SK-N-SH (cell line): ENCODE measurements at regions of chr11 and their contacts with region 1.

Region 1: GRCh38 chr11:116787786-116788486 is at the start of gene ZPR1:
- DNase-seq: peak; percentile 96
- H3K4me3 ChIP-seq: peak within 1 kb of the TSS; percentile 75 to 93
- H3K27ac ChIP-seq: peak within 1 kb of the TSS; percentile 58 to 70
- H3K4me1 ChIP-seq: peaks cover 5 to 20% of the 10 kb centered on the region in 2 experiments; a peak in 3 of 4 replicates
- H3K27me3 ChIP-seq: no peaks in the 10 kb centered on the region
- CTCF ChIP-seq: no peak
- EP300 ChIP-seq: no peak
- RAD21 ChIP-seq: no peak
- polyA plus RNA-seq, gene ZPR1: 52.4 and 69.2 TPM in 2 replicates

Region 2: GRCh38 chr11:116533186-116533825 is 254.6 kb before region 1 on chr11:
- CTCF ChIA-PET with region 1: no interaction called
- POLR2A ChIA-PET with region 1: no interaction called
- DNase-seq: peak; percentile 87
- H3K4me3 ChIP-seq: no peak overlapping the region
- H3K27ac ChIP-seq: peak overlapping the region in 1 of 2 experiments; percentile 83; a peak in 2 of 4 replicates
- H3K4me1 ChIP-seq: peaks cover 0 to 10% of the 10 kb centered on the region in 2 experiments; a peak in 1 of 4 replicates
- H3K27me3 ChIP-seq: peaks cover 13% of the 10 kb centered on the region; the same call in 1 of the 2 replicates
- CTCF ChIP-seq: 0 out of 2 replicates have a peak, but pooled peaks have one; percentile 27
- EP300 ChIP-seq: no peak
- RAD21 ChIP-seq: peak; percentile 81

Region 3: DNA sequence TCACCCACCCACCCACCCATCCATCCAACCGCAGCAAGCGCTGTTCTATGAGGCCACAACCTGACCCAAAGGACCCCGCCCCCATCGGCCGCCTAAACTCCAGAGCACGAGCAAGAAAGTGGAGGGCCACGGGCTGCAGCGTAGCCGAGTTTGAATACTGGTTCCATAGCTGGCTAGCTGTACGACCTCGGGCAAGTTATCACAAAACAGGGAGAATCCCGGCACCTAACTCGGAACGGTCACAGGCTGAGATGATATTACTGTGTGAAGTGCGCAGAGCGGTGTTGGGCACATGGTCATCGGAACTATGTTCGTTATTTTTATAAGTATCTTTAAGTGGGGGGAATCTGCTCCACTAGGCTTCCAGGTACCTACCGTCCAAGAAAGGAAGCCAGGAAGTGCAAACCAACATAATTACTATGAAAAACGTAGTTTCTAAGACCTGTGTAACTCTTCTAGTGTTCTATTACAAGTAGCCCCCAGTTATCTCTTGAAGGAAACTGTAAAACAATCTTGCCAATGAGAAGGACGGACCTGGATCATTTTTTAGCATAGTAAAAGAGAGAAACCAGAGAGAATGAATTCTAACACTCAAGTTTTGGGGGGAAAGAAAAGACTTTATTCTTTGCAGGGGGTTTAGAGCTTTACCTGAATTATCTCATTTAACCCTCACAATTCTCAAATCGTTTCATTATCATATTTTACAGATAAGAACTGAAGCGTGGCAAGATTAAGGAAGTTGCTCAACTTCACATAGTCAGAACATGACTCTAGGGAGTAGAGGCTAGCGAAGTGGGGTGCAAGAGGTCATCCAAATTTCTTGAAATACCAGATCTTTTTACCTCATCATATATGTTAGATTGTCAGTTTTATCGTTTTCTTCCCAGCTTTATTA is 14.5 kb before region 1 on chr11:
- CTCF ChIA-PET with region 1: interaction called, 13 read pairs
- POLR2A ChIA-PET with region 1: interaction called, 4 read pairs
- DNase-seq: no peak
- H3K4me3 ChIP-seq: peak overlapping the region; percentile 93 to 98
- H3K27ac ChIP-seq: peak overlapping the region; percentile 35 to 95
- H3K4me1 ChIP-seq: peaks cover 8% of the 10 kb centered on the region in 2 experiments; a peak in 3 of 4 replicates
- H3K27me3 ChIP-seq: no peaks in the 10 kb centered on the region
- CTCF ChIP-seq: no peak
- EP300 ChIP-seq: no peak
- RAD21 ChIP-seq: no peak

Region 4: DNA sequence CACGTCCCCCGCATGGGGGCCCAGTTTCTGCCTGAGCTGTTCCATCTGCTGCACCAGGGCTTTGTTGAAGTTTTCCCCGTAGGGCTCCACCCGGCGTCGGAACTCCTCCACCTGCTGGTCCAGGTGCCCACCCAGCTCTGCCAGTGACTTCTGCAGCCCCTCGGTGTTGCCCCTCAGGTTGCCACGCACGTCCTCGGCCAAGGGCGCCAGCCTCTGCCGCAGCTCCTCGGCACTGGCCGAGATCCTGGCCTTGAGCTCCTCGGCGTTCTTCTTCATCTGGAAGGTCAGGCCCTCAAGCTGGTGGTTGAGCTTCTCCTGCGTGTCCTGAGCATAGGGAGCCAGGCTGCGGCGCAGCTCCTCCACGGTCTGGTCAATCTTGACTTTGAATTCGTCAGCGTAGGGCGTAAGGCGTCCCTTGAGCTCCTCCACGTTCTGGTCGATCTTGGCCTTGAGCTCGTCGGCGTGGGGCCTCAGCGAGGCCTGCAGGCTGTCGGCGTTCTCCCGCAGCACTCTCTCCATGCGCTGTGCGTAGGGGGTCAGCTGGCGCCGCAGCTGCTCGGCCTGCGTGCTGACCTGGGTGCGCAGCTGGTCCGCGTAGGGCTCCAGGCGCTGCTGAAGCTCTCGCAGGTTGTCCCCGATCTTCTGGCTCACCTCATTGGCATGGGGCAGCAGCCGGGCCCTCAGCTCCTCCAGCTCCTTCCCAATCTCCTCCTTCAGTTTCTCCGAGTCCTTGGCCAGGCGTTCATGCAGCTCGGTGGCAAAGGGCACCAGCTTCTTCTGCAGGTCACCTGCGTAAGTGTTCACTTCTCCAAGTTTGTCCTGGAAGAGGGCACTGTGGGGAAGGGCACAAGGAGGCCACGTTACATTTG is 33.3 kb after region 1 on chr11:
- CTCF ChIA-PET with region 1: interaction called, 16 read pairs
- POLR2A ChIA-PET with region 1: no interaction called
- DNase-seq: no peak
- H3K4me3 ChIP-seq: no peak overlapping the region
- H3K27ac ChIP-seq: no peak overlapping the region
- H3K4me1 ChIP-seq: no peaks in the 10 kb centered on the region
- H3K27me3 ChIP-seq: no peaks in the 10 kb centered on the region
- CTCF ChIP-seq: no peak
- EP300 ChIP-seq: no peak
- RAD21 ChIP-seq: no peak

Region 5: GRCh38 chr11:116861539-116861938 is 73.6 kb after region 1 on chr11:
- CTCF ChIA-PET with region 1: interaction called, 21 read pairs
- POLR2A ChIA-PET with region 1: no interaction called
- DNase-seq: no peak
- H3K4me3 ChIP-seq: no peak overlapping the region
- H3K27ac ChIP-seq: peak overlapping the region; percentile 72 to 87
- H3K4me1 ChIP-seq: peaks cover 21 to 43% of the 10 kb centered on the region in 2 experiments
- H3K27me3 ChIP-seq: no peaks in the 10 kb centered on the region
- CTCF ChIP-seq: no peak
- EP300 ChIP-seq: no peak
- RAD21 ChIP-seq: no peak

Region 6: DNA sequence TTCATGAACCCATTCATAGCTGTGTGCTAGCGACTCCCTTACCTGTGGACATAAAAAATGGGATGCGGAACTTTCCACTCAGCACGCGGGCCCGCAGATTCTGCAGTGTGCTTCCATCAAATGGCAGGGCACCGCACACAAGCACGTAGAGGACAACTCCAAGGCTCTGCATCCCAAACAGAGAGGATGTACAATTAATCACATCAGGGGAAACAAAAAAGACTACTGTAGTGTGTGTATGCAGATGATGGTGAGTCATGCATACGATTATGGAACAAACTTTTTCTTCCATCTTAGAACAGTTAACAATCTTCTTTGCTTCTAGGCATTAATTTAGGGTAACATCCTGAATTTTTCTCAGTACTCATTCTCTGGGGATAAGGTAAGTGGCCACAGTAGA is 108.3 kb after region 1 on chr11:
- CTCF ChIA-PET with region 1: no interaction called
- POLR2A ChIA-PET with region 1: no interaction called
- DNase-seq: no peak
- H3K4me3 ChIP-seq: no peak overlapping the region
- H3K27ac ChIP-seq: no peak overlapping the region
- H3K4me1 ChIP-seq: no peaks in the 10 kb centered on the region
- H3K27me3 ChIP-seq: no peaks in the 10 kb centered on the region
- CTCF ChIP-seq: no peak
- EP300 ChIP-seq: no peak
- RAD21 ChIP-seq: no peak

Region 7: GRCh38 chr11:117098269-117099232 is 310.6 kb after region 1 on chr11 and contains the start of gene SIK3:
- CTCF ChIA-PET with region 1: interaction called, 268 read pairs
- POLR2A ChIA-PET with region 1: interaction called, 3 read pairs
- DNase-seq: peak; percentile 100
- H3K4me3 ChIP-seq: peak within 1 kb of the TSS; percentile 82
- H3K27ac ChIP-seq: peak within 1 kb of the TSS; percentile 64 to 74
- H3K4me1 ChIP-seq: peaks cover 29 to 30% of the 10 kb centered on the region in 2 experiments
- H3K27me3 ChIP-seq: no peaks in the 10 kb centered on the region
- CTCF ChIP-seq: peak; percentile 52
- EP300 ChIP-seq: no peak; a peak in 1 of 4 replicates
- RAD21 ChIP-seq: peak; percentile 63
- polyA plus RNA-seq, gene SIK3: 4.5 and 5.1 TPM in 2 replicates